ENCODE measurements at regions of chr1 and their contacts with region 1.

Region 1: GRCh38 chr1:223845810-223846682 is at the start of gene TP53BP2:
- DNase-seq: peak; percentile 90
- ATAC-seq: peak; percentile 92 to 95
- total RNA-seq, gene TP53BP2: 24.0 to 26.9 TPM

Region 2: GRCh38 chr1:223712194-223712849 is 133.7 kb before region 1 on chr1 and contains the start of gene CAPN2:
- intact Hi-C with region 1: loop called in 1 of 2 experiments (anchors 10 kb)
- DNase-seq: peak; percentile 90
- ATAC-seq: peak; percentile 94 to 96
- total RNA-seq, gene CAPN2: 89.1 to 107 TPM

Region 3: DNA sequence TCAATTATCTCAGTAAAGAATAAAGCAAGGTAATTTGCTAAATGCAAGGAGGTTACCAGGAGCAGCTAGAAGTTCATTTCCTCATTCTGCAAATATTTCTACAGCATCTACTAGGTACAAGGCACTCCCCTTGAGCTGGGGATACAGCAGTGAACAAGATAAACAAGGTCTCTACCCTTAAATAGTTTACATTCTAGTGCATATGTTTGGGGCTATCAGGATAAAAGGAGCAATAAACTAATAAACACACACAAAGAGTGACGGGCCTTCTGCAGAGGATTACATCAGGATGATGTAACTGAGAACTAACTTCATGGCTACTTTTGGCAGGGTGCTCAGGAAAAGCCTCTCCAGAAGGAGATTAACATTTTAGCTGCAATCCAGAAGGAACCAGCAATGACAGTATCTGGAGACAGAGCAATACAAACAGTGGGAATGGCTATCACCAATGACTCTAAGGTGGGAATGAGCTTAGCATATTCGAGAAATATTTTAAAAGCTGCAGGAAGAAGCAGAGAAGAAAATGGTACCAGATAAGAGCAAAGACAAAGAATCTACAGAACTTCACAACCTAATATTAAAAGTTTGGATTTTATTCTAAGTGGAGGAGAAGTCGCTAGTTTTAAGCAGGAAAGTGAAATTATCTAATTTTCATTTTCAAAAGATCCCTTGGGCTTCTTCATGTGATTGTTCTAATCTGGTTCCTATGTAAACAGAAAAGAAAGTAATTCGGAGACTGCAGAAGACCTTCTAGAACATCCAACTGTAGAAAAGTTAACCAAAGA is 26.1 kb before region 1 on chr1:
- intact Hi-C with region 1: no loop called
- DNase-seq: no peak
- ATAC-seq: peak; percentile 81 to 82

Region 4: GRCh38 chr1:223887747-223888418 is 41.8 kb after region 1 on chr1:
- intact Hi-C with region 1: loop called in 1 of 2 experiments (anchors 5 kb)
- DNase-seq: peak; percentile 43
- ATAC-seq: peak; percentile 97 to 98

Region 5: DNA sequence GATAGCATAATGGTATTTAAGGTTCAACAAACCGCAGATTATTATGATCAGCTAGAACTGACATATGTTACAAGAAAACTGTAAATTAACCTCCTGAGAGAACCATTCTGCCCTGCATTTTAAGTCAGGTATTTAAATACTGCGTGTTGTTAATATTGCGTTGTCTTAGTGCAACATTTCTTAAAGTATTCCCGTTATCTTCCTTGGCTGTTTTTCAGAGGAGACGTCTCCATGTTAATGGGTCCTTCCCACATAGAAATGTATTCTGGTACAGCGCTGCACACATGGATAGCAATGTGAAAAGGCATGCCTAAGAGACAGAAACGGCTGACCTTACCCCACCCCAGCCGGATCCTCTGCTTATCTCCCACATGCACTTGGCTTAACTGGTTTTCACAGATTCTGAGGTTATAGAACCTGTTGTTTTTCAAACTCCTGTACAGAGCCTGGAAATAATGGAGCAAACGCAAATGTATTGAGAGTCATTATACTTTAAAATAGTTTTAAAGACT is 314.2 kb after region 1 on chr1:
- intact Hi-C with region 1: no loop called
- DNase-seq: no peak
- ATAC-seq: peak in 1 of 2 donors; percentile 44

Measured in left cardiac atrium (tissue), 4 donors.